Activated CD8-positive, alpha-beta T cell treated with anti-CD3 and anti-CD28 coated beads for 36 hours (primary cell): ENCODE measurements at regions of chr22 and their contacts with region 1.

Region 1: DNA sequence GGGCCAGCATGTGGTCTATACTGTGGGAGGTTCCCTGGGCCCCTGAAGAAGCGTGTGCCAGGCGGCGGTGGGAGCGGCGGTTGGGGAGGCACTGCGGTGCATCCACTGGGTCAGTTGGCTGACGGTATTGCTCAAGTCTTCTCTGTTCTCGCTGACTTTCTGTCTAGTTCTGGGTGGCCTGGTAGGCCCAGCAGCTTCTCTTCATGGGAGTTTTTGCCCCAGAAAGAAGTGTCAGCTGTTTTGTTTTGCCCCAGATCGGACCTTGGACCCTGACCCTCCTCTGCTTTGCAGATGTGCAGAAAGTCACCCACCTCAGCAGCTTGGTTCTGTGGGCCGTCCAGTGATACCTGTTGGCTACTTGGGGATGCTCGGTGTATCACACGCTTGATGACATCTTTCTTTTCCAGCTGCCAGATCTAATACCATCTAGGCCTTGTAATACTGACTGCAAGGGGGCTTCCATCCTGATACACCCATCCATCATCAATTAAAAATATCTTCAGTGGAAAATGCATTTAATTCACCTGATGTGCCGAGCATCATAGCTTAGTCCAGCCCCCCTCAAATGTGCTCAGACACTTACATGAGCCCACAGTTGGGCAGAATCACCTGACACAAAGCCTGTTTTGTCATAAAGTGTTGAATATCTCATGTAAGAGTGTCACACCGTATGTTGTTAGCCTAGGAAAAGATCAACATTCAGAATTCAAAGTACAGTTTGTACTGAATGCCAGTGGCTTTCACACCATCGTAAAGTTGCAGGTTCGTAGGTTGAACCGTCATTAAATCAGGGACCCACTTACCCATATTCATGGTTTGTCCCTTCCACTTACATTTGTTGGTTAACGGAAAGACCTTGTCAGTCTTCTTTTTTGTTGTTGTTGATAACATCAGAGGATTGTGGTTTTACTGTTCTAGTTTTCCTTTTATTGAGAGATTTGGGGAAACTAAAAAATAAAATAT is 13.9 kb downstream of the ZBED4 start:
- DNase-seq: no peak
- ATAC-seq: peak; percentile 48
- H3K4me3 Mint-ChIP-seq: no peak overlapping the region
- H3K27ac Mint-ChIP-seq: peak overlapping the region; percentile 28
- H3K4me1 Mint-ChIP-seq: peaks cover 63% of the 10 kb centered on the region
- H3K27me3 Mint-ChIP-seq: no peaks in the 10 kb centered on the region
- CTCF ChIP-seq: no peak

Region 2: GRCh38 chr22:49852898-49853894 is 14.4 kb before region 1 on chr22 and contains the start of gene ZBED4:
- CTCF ChIA-PET with region 1: interaction called, 4 read pairs
- POLR2A ChIA-PET with region 1: interaction called, 10 read pairs
- intact Hi-C with region 1: no loop called
- DNase-seq: peak; percentile 98
- ATAC-seq: peak; percentile 92
- H3K4me3 Mint-ChIP-seq: peak within 1 kb of the TSS; percentile 90
- H3K27ac Mint-ChIP-seq: peak within 1 kb of the TSS; percentile 91
- H3K4me1 Mint-ChIP-seq: peaks cover 29% of the 10 kb centered on the region
- H3K27me3 Mint-ChIP-seq: peaks cover 12% of the 10 kb centered on the region
- CTCF ChIP-seq: no peak
- total RNA-seq, gene ZBED4: 19.7 to 20.1 TPM

Region 3: GRCh38 chr22:50002791-50003190 is 135.2 kb after region 1 on chr22:
- CTCF ChIA-PET with region 1: no interaction called
- POLR2A ChIA-PET with region 1: no interaction called
- intact Hi-C with region 1: no loop called
- DNase-seq: no peak
- ATAC-seq: no peak
- H3K4me3 Mint-ChIP-seq: no peak overlapping the region
- H3K27ac Mint-ChIP-seq: no peak overlapping the region
- H3K4me1 Mint-ChIP-seq: peaks cover 10% of the 10 kb centered on the region
- H3K27me3 Mint-ChIP-seq: peaks cover 11% of the 10 kb centered on the region
- CTCF ChIP-seq: no peak